ENCODE measurements at regions of chr16 and their contacts with region 1.

Region 1: GRCh38 chr16:22188595-22189442 is 17.3 kb upstream of the EEF2K start:
- DNase-seq: peak; percentile 65
- ATAC-seq: no peak

Region 2: DNA sequence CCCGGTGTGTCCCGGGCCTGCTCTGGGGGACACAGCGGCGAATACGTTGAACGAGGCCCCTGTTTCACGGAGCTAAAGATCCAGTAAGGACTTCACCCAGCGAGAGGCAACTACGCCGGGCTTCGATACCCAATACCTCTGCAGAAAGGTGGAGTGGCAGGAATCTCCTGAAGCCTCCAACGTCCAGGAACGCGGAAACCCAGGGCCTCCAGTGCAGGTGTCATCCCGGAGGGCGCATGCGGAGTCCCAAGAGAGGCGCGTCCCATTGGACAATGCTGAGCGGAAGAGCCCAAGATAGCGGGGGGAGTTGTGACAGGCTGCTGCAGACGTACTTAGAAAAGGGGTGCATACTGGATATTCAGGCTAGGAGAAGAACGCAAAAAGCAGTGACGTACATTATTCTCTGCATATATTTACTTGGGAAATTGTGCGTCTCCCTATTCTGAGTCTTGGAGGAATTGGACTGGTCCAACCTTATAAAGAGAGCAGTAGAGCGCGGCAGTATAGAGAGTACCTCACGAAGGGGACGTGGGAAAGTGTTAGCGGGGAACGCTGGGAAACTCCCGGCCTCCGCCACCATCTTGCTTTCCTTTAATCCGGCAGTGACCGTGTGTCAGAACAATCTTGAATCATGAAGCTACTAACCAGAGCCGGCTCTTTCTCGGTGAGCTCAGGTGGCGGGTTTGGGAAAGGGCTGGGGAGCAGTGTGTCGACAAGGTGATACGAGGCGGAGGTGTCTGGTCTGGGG is 235.9 kb before region 1 on chr16 and contains the start of gene UQCRC2:
- intact Hi-C with region 1: loop called (anchors 10 kb)
- DNase-seq: peak; percentile 91
- ATAC-seq: peak; percentile 97
- total RNA-seq, gene UQCRC2: 931 TPM

Region 3: DNA sequence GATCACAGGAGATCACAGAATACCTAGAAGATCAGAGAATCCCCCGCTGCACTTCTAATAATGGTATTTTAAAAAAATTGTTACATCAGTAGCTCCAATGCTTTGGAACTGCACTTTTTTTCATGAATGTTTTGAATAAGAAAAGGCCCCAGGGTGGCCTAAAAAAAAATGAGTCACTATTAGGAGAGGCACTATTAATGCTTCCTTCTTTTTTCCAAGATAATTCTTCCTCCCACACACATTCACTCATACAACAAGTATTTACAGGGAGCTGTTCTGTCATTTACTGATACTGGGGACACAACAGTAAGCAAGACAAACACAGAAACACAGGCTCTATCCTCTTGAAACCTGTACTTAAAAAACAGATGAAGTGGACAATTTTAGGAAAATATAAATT is 187.2 kb before region 1 on chr16:
- intact Hi-C with region 1: loop called (anchors 5 kb)
- DNase-seq: no peak
- ATAC-seq: no peak

Measured in Right ventricle myocardium superior (tissue), 1 donor.